ENCODE measurements at regions of chr13 and their contacts with region 1.

Region 1: GRCh38 chr13:106917673-106918556 is 350.0 kb upstream of the ARGLU1 start:
- DNase-seq: peak; percentile 71
- H3K4me3 ChIP-seq: peak overlapping the region; percentile 62
- H3K27ac ChIP-seq: peak overlapping the region; percentile 100
- H3K4me1 ChIP-seq: peaks cover 61% of the 10 kb centered on the region
- CTCF ChIP-seq: peak; percentile 84

Region 2: GRCh38 chr13:106536244-106537034 is 381.5 kb before region 1 on chr13:
- CTCF ChIA-PET with region 1: no interaction called
- POLR2A ChIA-PET with region 1: no interaction called
- intact Hi-C with region 1: loop called (anchors 2 kb)
- DNase-seq: peak; percentile 80
- H3K4me3 ChIP-seq: peak overlapping the region; percentile 68
- H3K27ac ChIP-seq: peak overlapping the region; percentile 25
- H3K4me1 ChIP-seq: no peaks in the 10 kb centered on the region
- CTCF ChIP-seq: peak; percentile 81

Region 3: GRCh38 chr13:106567474-106568298 is 350.2 kb before region 1 on chr13 and contains the start of gene ARGLU1:
- CTCF ChIA-PET with region 1: no interaction called
- POLR2A ChIA-PET with region 1: interaction called, 6 read pairs
- intact Hi-C with region 1: loop called (anchors 5 kb)
- DNase-seq: peak; percentile 88
- H3K4me3 ChIP-seq: peak within 1 kb of the TSS; percentile 88
- H3K27ac ChIP-seq: peak within 1 kb of the TSS; percentile 84
- H3K4me1 ChIP-seq: peaks cover 31% of the 10 kb centered on the region
- CTCF ChIP-seq: no peak
- total RNA-seq, gene ARGLU1: 71.9 and 89.1 TPM in 2 replicates

Region 4: DNA sequence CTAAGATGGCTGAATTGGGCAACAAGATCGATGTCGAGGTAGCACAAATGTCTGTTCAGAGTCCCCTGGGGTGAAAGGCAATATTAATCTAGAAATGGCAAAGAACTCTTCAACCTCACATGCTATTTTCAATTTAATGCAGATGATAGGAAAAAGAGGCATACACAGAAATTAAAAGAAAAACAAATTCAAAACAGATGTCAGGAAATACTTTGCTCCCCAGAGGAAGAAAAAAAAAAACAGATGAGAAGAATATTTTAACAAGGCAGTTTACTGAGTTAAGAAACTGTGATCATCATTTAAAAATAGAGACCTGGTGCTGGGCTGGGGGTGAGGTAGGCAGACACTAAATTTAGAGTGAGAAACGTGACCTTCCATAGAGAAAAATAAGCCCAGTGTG is 72.0 kb after region 1 on chr13:
- CTCF ChIA-PET with region 1: no interaction called
- POLR2A ChIA-PET with region 1: interaction called, 3 read pairs
- intact Hi-C with region 1: loop called (anchors 5 kb)
- DNase-seq: no peak
- H3K4me3 ChIP-seq: no peak overlapping the region
- H3K27ac ChIP-seq: peak overlapping the region; percentile 32
- H3K4me1 ChIP-seq: peaks cover 34% of the 10 kb centered on the region
- CTCF ChIP-seq: no peak

Region 5: GRCh38 chr13:107035778-107036177 is 117.9 kb after region 1 on chr13:
- CTCF ChIA-PET with region 1: no interaction called
- POLR2A ChIA-PET with region 1: no interaction called
- intact Hi-C with region 1: no loop called
- DNase-seq: no peak
- H3K4me3 ChIP-seq: no peak overlapping the region
- H3K27ac ChIP-seq: no peak overlapping the region
- H3K4me1 ChIP-seq: no peaks in the 10 kb centered on the region
- CTCF ChIP-seq: no peak

Region 6: DNA sequence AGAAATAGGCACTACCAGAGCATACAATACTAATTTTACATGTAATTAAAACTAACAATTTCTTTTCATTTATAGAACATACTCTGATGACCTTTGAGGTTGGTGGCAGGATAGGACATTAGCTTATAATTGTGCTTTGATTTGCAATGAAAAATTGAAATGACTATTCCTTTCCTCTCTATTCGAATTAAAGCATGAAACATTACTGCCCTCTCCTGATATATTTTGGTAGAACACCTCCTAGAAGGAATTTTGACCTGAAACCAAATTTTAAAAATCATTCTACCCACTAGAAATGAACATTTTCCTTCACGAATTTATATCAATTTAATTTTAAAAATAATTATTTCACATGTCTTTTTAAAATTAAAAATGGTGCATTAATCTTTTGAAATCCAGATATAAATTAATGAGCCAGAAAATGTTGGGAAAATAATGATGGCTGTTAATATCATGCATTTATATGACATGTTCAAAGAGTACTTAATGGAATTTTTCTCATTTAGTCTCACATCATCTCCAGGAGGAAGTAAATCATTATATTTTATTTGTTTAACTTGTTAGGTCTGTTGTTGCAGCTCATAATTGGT is 206.3 kb after region 1 on chr13:
- CTCF ChIA-PET with region 1: no interaction called
- POLR2A ChIA-PET with region 1: no interaction called
- intact Hi-C with region 1: loop called (anchors 2 kb)
- DNase-seq: peak; percentile 29
- H3K4me3 ChIP-seq: no peak overlapping the region
- H3K27ac ChIP-seq: no peak overlapping the region
- H3K4me1 ChIP-seq: peaks cover 8% of the 10 kb centered on the region
- CTCF ChIP-seq: peak; percentile 76